ENCODE measurements at regions of chr17 and their contacts with region 1.

Region 1: DNA sequence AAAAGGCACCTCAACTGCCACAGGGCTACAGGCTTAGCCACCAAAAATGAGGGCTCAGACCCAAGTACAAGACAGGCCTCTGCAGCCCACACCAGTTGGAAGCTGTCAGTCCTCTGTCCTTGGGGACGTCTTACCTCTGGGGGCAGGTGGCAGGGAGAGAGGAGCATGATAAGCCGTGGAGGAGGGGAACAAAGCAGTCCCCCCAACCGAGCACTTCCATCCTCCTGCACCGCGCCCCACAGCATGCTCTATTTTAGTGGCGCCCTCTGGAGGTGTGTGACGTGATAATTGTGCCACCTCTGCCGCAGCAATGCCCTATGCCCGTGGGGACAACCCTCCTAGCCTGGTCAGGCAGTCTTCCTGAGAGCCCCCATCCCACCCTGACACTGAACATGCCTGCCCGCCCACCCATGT is 13.6 kb downstream of the G6PC3 start:
- DNase-seq: no peak
- ATAC-seq: no peak
- H3K4me3 Mint-ChIP-seq: no peak overlapping the region
- H3K27ac Mint-ChIP-seq: no peak overlapping the region
- H3K4me1 Mint-ChIP-seq: peaks cover 8% of the 10 kb centered on the region
- H3K27me3 Mint-ChIP-seq: no peaks in the 10 kb centered on the region

Region 2: DNA sequence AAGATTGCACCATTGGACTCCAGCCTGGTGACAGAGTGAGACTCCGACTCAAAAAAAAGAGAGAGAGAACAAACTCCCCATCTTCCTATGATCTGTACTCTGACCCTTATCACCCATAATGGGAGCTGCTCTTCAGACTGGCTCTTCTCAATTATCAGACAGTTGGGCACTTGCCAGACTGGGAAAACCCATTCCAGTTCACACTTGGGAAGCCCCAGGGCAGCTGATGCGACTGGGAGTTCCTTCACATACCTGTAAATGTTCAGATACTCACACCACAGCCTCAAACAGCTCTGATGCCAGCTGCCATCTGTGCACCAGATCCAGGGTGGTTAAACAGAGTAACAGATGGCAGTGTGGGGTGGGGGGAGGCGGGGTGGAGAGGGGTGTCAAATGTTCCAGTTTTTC is 45.5 kb before region 1 on chr17:
- CTCF ChIA-PET with region 1: no interaction called
- DNase-seq: no peak
- ATAC-seq: no peak
- H3K4me3 Mint-ChIP-seq: no peak overlapping the region
- H3K27ac Mint-ChIP-seq: no peak overlapping the region
- H3K4me1 Mint-ChIP-seq: peaks cover 29% of the 10 kb centered on the region
- H3K27me3 Mint-ChIP-seq: no peaks in the 10 kb centered on the region

Region 3: DNA sequence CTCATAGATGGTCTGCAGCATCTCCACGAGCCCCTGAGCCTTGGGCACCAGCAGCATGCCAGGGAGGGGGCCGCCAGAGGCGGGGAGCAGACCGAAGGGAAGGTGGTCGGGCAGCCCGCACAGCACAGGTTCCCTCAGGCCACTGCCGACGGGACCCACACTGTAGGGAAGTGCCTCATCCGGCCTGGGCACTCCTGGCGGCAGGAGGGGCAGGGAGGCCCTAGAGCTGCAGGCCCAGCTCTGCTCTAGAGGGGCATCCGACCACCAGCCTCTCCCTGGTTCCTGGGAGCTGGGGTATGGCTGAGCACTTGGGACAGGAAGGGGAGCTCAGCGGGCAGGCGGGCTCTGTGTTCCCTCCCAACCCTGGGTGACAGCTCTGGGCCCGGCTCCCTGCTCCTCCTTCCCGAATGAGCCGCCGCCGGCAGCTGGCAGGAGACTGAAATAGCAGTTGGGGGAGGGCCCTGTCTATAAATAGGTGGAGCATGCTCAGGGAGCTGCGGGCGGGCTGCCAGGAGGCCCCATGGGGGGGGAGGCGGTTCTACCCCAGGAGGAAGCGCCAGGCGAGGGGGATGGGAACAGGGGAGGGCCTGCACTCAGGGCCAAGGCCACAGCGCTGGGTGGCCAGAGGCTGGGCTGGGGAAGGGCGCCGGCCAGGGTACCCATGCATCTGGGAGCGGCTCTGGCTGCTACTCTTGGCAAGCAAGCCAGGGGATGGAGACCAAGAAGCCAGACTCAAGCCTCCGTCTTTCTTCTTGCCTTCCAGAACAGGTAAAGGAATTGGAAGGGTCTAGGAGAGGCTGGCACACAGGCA is 26.9 kb after region 1 on chr17:
- CTCF ChIA-PET with region 1: interaction called, 11 read pairs
- DNase-seq: peak; percentile 78
- ATAC-seq: peak; percentile 78
- H3K4me3 Mint-ChIP-seq: peak overlapping the region; percentile 40
- H3K27ac Mint-ChIP-seq: no peak overlapping the region
- H3K4me1 Mint-ChIP-seq: peaks cover 16% of the 10 kb centered on the region
- H3K27me3 Mint-ChIP-seq: no peaks in the 10 kb centered on the region

Region 4: GRCh38 chr17:44176671-44177501 is 92.7 kb after region 1 on chr17:
- CTCF ChIA-PET with region 1: no interaction called
- DNase-seq: no peak
- ATAC-seq: no peak
- H3K4me3 Mint-ChIP-seq: no peak overlapping the region
- H3K27ac Mint-ChIP-seq: no peak overlapping the region
- H3K4me1 Mint-ChIP-seq: peaks cover 3% of the 10 kb centered on the region
- H3K27me3 Mint-ChIP-seq: no peaks in the 10 kb centered on the region